IMR-90 (cell line): ENCODE measurements at regions of chr6 and their contacts with region 1.

Region 1: DNA sequence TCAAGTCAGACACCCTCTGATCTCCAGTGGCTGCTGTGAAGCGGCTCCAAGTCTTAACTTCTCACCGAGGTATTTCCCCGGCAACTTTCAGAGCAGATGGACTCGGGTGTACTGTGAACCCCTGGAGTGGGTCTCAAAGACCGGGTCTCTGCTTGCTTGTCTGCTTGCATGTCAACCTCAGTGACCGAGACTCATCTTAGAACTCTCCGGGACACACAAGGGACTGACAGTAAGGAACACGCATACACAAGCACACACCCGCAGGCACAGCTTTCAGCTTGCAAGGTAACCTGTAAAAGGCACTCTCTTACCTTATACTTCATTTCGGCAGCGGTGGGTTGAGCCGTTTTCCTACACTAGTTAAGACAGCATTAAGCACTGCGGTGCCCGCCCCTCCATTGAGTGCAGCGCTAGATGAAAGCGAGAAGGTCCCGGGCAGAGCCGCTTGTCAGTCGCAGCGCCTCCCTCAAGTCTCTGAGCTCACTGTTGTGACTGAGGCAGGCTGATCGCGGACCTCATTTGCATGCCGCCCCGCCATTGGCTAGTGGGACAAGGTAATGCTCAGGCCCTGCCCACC is at the start of gene NEDD9:
- DNase-seq: peak; percentile 97
- ATAC-seq: peak; percentile 98
- H3K4me3 ChIP-seq: peak within 1 kb of the TSS; percentile 71
- H3K27ac ChIP-seq: peak within 1 kb of the TSS; percentile 53
- H3K4me1 ChIP-seq: peaks cover 12% of the 10 kb centered on the region
- H3K27me3 ChIP-seq: no peaks in the 10 kb centered on the region
- CTCF ChIP-seq: no peak
- POLR2A ChIP-seq: peak; percentile 98
- RAD21 ChIP-seq: no peak; the same call in 1 of the 2 replicates
- total RNA-seq, gene NEDD9: 16.5 and 16.7 TPM in 2 replicates

Region 2: DNA sequence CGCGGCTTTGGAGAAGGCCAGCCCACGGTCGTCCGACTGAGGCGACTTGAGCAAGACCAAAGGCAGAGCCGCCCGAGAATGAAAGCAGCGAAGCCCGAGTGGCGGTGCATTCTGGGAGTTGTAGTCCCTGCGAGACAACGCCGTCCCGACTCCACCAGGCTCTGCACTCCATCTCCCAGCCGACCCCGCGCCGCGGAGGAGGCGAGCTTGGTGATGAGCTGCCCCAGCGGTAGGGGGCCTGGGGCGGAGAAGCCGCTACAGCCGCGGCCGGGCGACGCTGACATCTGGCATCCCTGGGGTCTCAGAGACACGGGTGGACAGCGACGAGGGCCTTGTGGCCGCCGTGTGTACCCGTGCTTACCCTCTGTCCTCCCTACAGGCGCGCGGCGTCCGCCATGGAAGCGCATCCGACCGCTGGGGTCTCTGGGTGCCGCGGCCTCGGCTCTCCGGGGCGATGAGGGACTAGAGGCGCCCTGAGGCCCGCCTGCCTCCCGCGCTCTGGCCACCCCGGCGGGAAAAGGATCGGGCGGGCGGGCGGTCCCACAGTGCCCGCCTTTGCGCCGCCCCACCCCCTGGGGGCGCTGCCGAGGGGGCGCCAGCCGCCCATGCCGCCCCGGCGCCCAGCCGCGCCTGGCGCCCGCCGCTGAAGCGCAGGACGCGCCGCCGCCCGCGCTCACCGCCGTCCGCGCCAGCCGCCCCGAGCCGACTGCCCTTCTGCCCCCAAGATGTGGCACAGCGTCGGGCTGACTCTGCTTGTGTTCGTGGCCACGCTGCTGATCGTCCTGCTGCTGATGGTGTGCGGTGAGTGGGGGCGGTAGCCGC is 138.5 kb before region 1 on chr6 and contains the start of gene SMIM13:
- CTCF ChIA-PET with region 1: no interaction called
- POLR2A ChIA-PET with region 1: no interaction called
- dilution Hi-C with region 1: no loop called
- in situ Hi-C with region 1: no loop called
- intact Hi-C with region 1: loop called (anchors 2 kb)
- DNase-seq: peak; percentile 98
- ATAC-seq: peak; percentile 96
- H3K4me3 ChIP-seq: peak within 1 kb of the TSS; percentile 70
- H3K27ac ChIP-seq: peak within 1 kb of the TSS; percentile 96
- H3K4me1 ChIP-seq: peaks cover 3% of the 10 kb centered on the region; the same call in 1 of the 2 replicates
- H3K27me3 ChIP-seq: no peaks in the 10 kb centered on the region
- CTCF ChIP-seq: peak; percentile 61
- POLR2A ChIP-seq: peak; percentile 82
- RAD21 ChIP-seq: peak; percentile 31; the same call in 1 of the 2 replicates
- total RNA-seq, gene SMIM13: 10.0 and 17.2 TPM in 2 replicates

Region 3: DNA sequence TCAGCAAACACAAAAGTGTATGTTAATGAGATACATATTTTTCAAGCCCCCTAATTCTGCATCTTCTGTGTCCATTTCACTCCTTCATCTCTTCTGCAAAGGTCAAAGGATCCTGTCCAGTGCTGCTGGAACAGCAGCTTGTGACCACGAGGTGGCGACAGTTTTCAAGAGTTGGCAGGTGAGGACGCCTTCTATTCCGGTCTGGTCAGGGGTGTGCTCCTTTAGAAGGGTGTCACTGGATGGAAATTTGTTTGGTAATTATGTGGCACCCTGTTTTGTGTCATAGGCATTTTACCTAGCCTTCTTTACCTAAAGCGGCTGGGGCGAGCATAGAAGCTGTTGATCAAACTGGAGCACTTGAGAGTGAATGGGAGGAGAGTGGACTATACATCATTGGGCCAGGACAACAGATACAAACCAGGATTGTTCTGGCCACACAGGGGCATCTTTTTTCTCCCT is 87.9 kb before region 1 on chr6:
- CTCF ChIA-PET with region 1: no interaction called
- POLR2A ChIA-PET with region 1: no interaction called
- dilution Hi-C with region 1: no loop called
- in situ Hi-C with region 1: no loop called
- intact Hi-C with region 1: loop called (anchors 2 kb)
- DNase-seq: peak; percentile 72
- ATAC-seq: peak; percentile 76
- H3K4me3 ChIP-seq: no peak overlapping the region
- H3K27ac ChIP-seq: no peak overlapping the region
- H3K4me1 ChIP-seq: peaks cover 4% of the 10 kb centered on the region; the same call in 1 of the 2 replicates
- H3K27me3 ChIP-seq: no peaks in the 10 kb centered on the region
- CTCF ChIP-seq: peak; percentile 88
- POLR2A ChIP-seq: 0 out of 2 replicates have a peak, but pooled peaks have one; percentile 49
- RAD21 ChIP-seq: peak; percentile 96

Region 4: DNA sequence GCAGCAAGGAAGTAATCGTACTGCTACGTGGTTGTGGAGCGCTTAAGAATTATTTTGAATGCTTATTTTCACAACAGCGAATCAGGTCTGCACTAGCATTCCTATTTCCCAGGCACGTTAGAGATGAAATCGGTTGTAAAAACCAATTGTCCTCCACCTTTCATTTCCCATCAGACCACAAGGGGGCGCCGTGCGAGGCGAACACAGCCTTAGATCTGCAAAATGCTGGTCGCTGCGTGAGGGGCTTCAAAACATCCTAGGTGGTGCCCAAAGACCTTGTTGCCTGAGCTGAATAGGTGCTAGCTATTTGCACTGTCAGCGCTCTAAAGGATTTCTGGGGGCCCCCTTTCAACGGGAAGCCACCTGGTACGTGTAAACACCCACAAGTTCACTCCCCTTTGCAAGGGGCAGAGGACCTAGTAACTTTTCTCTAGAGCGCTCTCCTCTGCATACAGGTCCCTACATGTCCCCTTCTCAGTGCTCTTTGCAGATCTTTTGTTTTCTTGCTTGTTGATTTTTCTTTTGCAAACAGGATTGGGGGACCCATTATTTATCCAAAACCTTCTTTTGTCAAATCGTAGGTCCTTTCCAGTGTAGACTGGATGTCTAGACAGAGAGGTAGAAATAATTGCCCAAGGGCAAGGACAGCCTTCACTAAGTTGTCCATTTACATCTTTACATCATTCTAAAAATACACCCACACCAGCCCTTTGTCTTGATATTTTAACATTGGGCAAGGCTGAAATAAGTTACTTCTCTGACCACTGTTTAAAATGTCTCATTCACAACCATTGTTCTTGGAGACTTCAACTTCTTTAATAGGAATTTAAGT is 59.6 kb before region 1 on chr6:
- CTCF ChIA-PET with region 1: no interaction called
- POLR2A ChIA-PET with region 1: no interaction called
- dilution Hi-C with region 1: no loop called
- in situ Hi-C with region 1: no loop called
- intact Hi-C with region 1: loop called (anchors 2 kb)
- DNase-seq: peak; percentile 27
- ATAC-seq: peak; percentile 62
- H3K4me3 ChIP-seq: no peak overlapping the region
- H3K27ac ChIP-seq: no peak overlapping the region
- H3K4me1 ChIP-seq: no peaks in the 10 kb centered on the region
- H3K27me3 ChIP-seq: no peaks in the 10 kb centered on the region
- CTCF ChIP-seq: peak; percentile 70
- POLR2A ChIP-seq: no peak
- RAD21 ChIP-seq: peak; percentile 73

Region 5: DNA sequence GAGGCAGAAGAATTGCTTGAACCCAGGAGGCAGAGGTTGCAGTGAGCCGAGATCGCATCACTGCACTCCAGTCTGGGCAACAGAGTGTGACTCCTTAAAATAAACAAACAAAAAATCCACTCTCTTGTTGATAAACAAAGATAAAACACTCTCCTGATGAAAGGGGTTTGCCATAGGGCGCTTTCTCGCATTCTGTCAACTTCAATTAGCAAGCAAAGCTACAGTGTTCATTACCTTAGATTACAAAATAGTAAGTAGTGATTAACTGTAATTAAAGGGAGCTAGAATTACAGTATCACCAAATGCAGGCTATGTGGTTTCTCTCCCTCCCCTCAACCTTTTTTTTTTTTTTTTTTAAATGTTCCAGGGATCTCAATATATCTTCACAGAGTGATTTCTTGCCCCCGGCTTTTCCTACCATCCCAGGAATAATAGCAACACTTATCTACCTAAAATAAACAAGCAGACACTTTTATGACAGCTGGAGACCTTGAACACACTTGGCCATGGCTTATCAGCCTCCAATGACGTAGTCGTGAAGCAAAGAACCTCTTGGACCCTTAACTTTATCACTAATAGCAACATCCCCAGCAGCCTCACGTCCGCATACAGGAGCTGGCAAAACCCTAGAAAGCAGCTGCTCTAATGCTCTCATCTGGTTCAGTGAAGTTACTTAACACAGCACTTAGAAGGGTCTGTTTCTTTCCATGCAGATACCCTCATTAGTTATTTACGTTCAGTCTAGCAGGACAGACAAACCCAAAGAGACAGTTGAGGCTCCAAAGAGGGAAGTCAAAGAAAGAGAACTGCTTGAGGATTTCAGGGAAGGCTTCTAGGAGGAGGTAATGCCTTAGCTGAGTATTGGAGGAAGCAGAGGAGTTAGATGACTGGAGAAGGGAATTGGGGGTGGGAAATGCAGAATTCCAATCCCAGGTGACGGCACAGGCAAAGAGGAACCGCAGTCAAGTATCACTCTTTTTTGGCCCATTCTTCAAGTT is 38.0 kb after region 1 on chr6:
- CTCF ChIA-PET with region 1: no interaction called
- POLR2A ChIA-PET with region 1: no interaction called
- dilution Hi-C with region 1: no loop called
- in situ Hi-C with region 1: no loop called
- intact Hi-C with region 1: loop called (anchors 2 kb)
- DNase-seq: peak; percentile 10
- ATAC-seq: no peak
- H3K4me3 ChIP-seq: no peak overlapping the region
- H3K27ac ChIP-seq: peak overlapping the region; percentile 55; the same call in 1 of the 2 replicates
- H3K4me1 ChIP-seq: peaks cover 22% of the 10 kb centered on the region
- H3K27me3 ChIP-seq: no peaks in the 10 kb centered on the region
- CTCF ChIP-seq: no peak
- POLR2A ChIP-seq: no peak
- RAD21 ChIP-seq: no peak

Region 6: GRCh38 chr6:11317885-11318771 is 85.8 kb after region 1 on chr6:
- CTCF ChIA-PET with region 1: no interaction called
- POLR2A ChIA-PET with region 1: interaction called, 3 read pairs
- dilution Hi-C with region 1: no loop called
- in situ Hi-C with region 1: no loop called
- intact Hi-C with region 1: loop called (anchors 5 kb)
- DNase-seq: peak; percentile 98
- ATAC-seq: peak; percentile 91
- H3K4me3 ChIP-seq: no peak overlapping the region
- H3K27ac ChIP-seq: peak overlapping the region; percentile 25; the same call in 1 of the 2 replicates
- H3K4me1 ChIP-seq: peaks cover 10% of the 10 kb centered on the region
- H3K27me3 ChIP-seq: no peaks in the 10 kb centered on the region
- CTCF ChIP-seq: no peak
- POLR2A ChIP-seq: no peak
- RAD21 ChIP-seq: peak; percentile 26; the same call in 1 of the 2 replicates

Region 7: GRCh38 chr6:11428895-11429294 is 196.6 kb after region 1 on chr6:
- CTCF ChIA-PET with region 1: no interaction called
- POLR2A ChIA-PET with region 1: interaction called, 4 read pairs
- dilution Hi-C with region 1: no loop called
- in situ Hi-C with region 1: no loop called
- intact Hi-C with region 1: loop called (anchors 2 kb)
- DNase-seq: peak; percentile 76
- ATAC-seq: peak; percentile 75
- H3K4me3 ChIP-seq: no peak overlapping the region
- H3K27ac ChIP-seq: peak overlapping the region; percentile 56; the same call in 1 of the 2 replicates
- H3K4me1 ChIP-seq: peaks cover 39% of the 10 kb centered on the region
- H3K27me3 ChIP-seq: no peaks in the 10 kb centered on the region
- CTCF ChIP-seq: no peak
- POLR2A ChIP-seq: no peak
- RAD21 ChIP-seq: no peak

Region 8: DNA sequence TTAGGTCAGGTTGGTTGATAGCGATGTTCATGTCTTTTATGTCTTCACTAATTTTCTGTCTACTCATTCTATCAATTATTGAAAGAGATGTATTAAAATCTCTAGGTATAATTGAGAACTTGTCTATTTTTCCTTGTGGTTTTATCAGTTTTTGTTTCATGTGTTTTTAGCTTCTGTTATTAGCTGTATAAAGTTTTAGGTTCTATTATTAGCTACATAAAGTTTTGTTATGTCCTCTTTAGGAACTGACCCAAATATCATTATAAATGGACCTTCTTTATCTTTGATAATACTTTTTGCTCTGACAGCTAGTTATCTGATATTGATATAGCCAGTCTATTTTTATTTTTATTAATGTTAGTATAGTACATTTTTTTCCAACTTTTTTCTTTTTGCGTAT is 212.9 kb after region 1 on chr6:
- CTCF ChIA-PET with region 1: no interaction called
- POLR2A ChIA-PET with region 1: no interaction called
- dilution Hi-C with region 1: no loop called
- in situ Hi-C with region 1: no loop called
- intact Hi-C with region 1: no loop called
- DNase-seq: no peak
- ATAC-seq: no peak
- H3K4me3 ChIP-seq: no peak overlapping the region
- H3K27ac ChIP-seq: no peak overlapping the region
- H3K4me1 ChIP-seq: no peaks in the 10 kb centered on the region
- H3K27me3 ChIP-seq: no peaks in the 10 kb centered on the region
- CTCF ChIP-seq: no peak
- POLR2A ChIP-seq: no peak
- RAD21 ChIP-seq: no peak